ENCODE measurements at regions of chr9 and their contacts with region 1.

Region 1: DNA sequence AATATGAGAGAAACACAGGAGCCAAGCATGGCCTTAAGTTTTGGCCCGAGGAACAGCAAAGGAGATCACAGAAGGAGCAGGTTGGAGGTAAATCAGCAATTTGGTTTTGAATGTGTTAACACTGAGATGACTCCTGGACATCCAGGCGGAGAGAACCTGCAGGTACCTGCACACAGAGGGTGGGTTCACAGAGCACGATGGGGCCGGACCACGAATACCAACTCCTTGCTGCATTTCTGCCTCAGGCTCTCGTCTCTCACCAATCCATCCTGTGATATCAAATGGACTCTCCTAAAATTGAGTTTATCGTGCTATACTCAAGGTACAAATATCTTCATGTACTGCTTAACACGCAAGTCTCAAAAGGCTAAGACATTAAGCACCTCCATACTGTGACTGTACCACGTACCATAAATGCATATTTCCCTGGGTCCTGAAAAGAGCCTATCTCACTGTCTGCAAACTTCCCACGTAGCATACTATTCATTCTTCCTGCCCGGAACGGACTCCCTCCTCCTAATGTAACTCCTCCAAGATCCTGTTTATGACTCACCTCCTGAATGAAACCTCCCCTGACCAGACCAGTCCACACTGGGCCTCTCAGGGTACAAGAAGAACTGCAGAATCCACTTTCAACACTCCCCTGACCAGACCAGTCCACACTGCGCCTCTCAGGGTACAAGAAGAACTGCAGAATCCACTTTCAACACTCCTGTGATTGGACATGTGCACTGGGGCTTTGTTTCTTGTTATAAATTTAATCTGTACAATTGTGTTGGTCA is 380.8 kb upstream of the RFX3 start:
- DNase-seq: peak; percentile 40 to 63
- H3K4me3 ChIP-seq: no peak overlapping the region
- H3K27ac ChIP-seq: peak overlapping the region; percentile 47
- H3K4me1 ChIP-seq: peaks cover 10% of the 10 kb centered on the region
- H3K27me3 ChIP-seq: no peaks in the 10 kb centered on the region
- CTCF ChIP-seq: no peak

Region 2: GRCh38 chr9:3863111-3863528 is 43.5 kb before region 1 on chr9:
- CTCF ChIA-PET with region 1: no interaction called
- POLR2A ChIA-PET with region 1: no interaction called
- intact Hi-C with region 1: loop called (anchors 5 kb)
- DNase-seq: peak; percentile 50 to 80
- H3K4me3 ChIP-seq: peak overlapping the region; percentile 26; the same call in 1 of the 2 replicates
- H3K27ac ChIP-seq: peak overlapping the region; percentile 73
- H3K4me1 ChIP-seq: peaks cover 15% of the 10 kb centered on the region
- H3K27me3 ChIP-seq: no peaks in the 10 kb centered on the region
- CTCF ChIP-seq: no peak

Region 3: DNA sequence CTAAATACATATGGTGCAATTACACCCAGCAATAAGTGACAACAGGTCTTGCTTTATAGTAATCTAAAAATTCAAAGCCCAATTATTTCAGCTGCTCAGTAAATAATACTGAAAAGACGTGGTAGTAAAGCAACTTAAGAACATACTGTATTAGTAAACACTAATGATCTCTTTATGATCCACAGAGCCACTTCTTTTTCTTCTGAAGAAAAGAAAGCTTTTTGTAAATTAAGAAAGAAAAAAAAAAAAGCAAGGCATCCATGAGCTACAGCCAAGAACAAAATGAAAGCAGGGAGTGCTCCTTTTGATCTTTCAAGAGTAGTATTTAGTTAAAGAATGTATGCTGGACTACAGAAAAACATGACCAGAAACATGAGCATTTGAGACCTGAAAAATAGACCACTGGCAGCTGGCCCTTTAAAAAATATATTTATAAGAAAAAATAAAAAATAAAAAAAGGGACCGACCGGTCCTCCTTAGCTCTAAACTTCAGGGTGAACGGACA is 44.6 kb after region 1 on chr9:
- CTCF ChIA-PET with region 1: no interaction called
- POLR2A ChIA-PET with region 1: interaction called, 25 read pairs
- intact Hi-C with region 1: no loop called
- DNase-seq: no peak
- H3K4me3 ChIP-seq: no peak overlapping the region
- H3K27ac ChIP-seq: no peak overlapping the region
- H3K4me1 ChIP-seq: no peaks in the 10 kb centered on the region
- H3K27me3 ChIP-seq: no peaks in the 10 kb centered on the region
- CTCF ChIP-seq: no peak

Measured in PC-9 (cell line).